ENCODE measurements at regions of chr14 and their contacts with region 1.

Region 1: GRCh38 chr14:21039585-21040369 is 2.4 kb upstream of the RNASE7 start:
- DNase-seq: peak in 1 of 2 donors; percentile 72
- ATAC-seq: peak; percentile 53 to 68
- H3K4me3 ChIP-seq: peak overlapping the region in 2 of 4 donors; percentile 19 to 26
- H3K27ac ChIP-seq: peak overlapping the region; percentile 83 to 91 (median 86)
- H3K4me1 ChIP-seq: peaks cover 62 to 75% of the 10 kb centered on the region in 2 donors
- H3K27me3 ChIP-seq: no peaks in the 10 kb centered on the region
- CTCF ChIP-seq: peak; percentile 77 to 84 (median 79)
- POLR2A ChIP-seq: peak in 1 of 2 donors; percentile 1

Region 2: DNA sequence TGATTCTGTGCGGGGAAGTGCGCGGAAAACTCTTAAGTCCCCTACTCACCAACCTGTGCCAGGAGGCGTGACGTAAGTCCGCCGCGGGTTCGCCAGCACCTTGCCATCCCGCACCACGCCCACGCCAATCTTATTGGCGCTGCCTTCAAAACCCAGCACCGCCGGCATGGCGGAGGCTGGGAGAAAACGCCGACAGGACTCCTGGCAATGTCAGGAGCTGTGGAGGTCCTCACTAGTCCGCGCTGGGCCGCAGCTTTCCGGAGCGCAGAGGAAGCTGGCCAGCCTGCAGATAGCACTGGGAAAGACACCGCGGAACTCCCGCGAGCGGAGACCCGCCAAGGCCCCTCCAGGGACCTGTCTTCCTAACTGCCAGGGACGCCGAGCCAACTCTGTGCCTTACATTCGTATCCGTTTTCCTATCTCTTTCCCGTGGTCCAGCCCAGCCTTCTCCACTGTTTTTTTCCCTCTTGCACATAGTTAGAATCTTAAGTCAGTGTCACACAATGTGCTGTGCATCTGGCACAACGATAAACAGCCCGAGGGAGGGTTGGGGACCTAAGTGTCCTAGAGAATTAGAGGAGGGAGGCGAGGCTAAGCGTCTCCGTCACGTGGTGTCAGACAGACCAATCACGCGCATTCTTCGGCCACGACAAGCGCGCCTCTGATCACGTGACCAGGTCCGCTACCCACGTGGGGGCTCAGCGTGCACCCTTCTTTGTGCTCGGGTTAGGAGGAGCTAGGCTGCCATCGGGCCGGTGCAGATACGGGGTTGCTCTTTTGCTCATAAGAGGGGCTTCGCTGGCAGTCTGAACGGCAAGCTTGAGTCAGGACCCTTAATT is 585.0 kb before region 1 on chr14 and contains the starts of genes APEX1 and OSGEP:
- in situ Hi-C with region 1: loop called in 1 of 4 experiments (anchors 25 kb)
- intact Hi-C with region 1: no loop called
- DNase-seq: peak; percentile 99
- ATAC-seq: peak; percentile 95 to 96
- H3K4me3 ChIP-seq: peak within 1 kb of the TSS; percentile 81 to 88 (median 87)
- H3K27ac ChIP-seq: peak within 1 kb of the TSS; percentile 86 to 98 (median 98)
- H3K4me1 ChIP-seq: peaks cover 23 to 29% of the 10 kb centered on the region in 2 donors
- H3K27me3 ChIP-seq: no peaks in the 10 kb centered on the region
- CTCF ChIP-seq: peak in 3 of 5 experiments; percentile 20 to 51 (median 51)
- POLR2A ChIP-seq: peak; percentile 91 to 95
- total RNA-seq, gene APEX1: 65.6 to 132 (median 94.2) TPM
- total RNA-seq, gene OSGEP: 15.8 to 21.7 (median 20.5) TPM

Region 3: GRCh38 chr14:20461274-20462001 is 578.3 kb before region 1 on chr14 and contains the start of gene PIP4P1:
- in situ Hi-C with region 1: loop called in 1 of 4 experiments (anchors 25 kb)
- intact Hi-C with region 1: loop called (anchors 1 kb)
- DNase-seq: peak; percentile 100
- ATAC-seq: peak; percentile 96 to 97
- H3K4me3 ChIP-seq: peak within 1 kb of the TSS; percentile 93 to 99 (median 96)
- H3K27ac ChIP-seq: peak within 1 kb of the TSS; percentile 98 to 99 (median 98)
- H3K4me1 ChIP-seq: peaks cover 15 to 16% of the 10 kb centered on the region in 2 donors
- H3K27me3 ChIP-seq: no peaks in the 10 kb centered on the region
- CTCF ChIP-seq: peak in 2 of 5 experiments; percentile 20 to 39
- POLR2A ChIP-seq: peak; percentile 97 to 99
- total RNA-seq, gene PIP4P1: 18.8 to 38.5 (median 21.7) TPM

Region 4: DNA sequence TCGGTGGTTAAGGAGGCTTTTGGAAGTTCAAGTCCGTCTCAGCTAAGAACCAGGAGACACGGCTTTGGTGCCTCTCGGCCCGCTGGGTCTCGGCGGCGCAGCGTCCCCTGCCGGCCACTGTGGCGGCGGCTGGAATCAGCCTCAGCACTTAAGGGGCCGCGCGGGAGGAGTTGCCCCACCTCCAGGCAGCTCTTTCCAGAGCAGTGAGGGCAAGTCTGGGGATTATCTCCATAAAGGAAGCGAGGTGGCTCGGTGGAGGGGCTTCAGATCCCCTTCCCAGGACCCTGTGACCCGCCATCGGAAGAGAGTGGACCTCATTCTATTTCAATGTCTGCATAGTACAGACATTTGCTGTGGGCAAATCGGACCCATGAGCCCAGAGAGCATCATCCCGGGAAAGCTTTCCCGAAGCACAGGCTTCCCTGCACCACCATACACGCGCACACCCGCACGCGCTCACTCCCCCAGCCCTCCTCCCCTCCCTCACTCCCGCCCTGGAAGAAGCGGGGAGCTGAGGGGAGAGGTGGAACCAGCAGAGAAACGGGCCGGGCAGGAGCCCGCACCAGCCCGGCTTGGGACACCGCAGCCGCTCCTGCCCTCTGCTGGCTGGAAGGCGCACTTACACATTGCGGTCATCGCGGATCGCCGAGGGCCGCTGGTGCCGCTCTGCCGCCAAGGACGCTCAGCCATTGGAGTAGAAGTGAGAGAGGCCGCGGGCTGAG is 68.6 kb before region 1 on chr14:
- in situ Hi-C with region 1: no loop called
- intact Hi-C with region 1: loop called (anchors 1 kb)
- DNase-seq: peak; percentile 62 to 74
- ATAC-seq: peak; percentile 92 to 93
- H3K4me3 ChIP-seq: peak overlapping the region; percentile 68 to 80 (median 71)
- H3K27ac ChIP-seq: peak overlapping the region; percentile 40 to 67 (median 59)
- H3K4me1 ChIP-seq: peaks cover 5 to 7% of the 10 kb centered on the region in 2 donors
- H3K27me3 ChIP-seq: no peaks in the 10 kb centered on the region
- CTCF ChIP-seq: peak; percentile 77 to 88 (median 84)
- POLR2A ChIP-seq: no peak

Region 5: DNA sequence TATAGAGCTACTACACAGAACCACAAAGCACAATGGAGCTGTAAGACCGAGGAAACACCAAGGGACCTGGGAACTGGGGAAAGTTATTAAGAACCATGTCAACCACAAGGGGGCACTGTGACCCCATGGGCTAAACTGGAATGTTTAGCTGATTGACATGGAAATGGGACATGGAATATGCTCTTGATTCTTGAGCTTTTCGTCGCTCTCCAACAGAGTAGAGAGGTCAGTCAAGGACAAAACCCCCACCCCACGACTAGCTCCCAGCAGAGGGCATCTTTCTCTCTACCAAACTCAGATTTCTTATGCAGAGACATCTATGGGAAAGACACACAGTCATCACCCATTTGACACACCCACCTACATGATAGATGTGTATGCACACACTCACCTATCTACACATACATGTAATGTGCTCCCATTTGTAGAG is 25.0 kb before region 1 on chr14:
- in situ Hi-C with region 1: no loop called
- intact Hi-C with region 1: loop called (anchors 1 kb)
- DNase-seq: peak; percentile 78 to 86
- ATAC-seq: peak; percentile 72 to 88
- H3K4me3 ChIP-seq: no peak overlapping the region
- H3K27ac ChIP-seq: peak overlapping the region; percentile 97 to 100 (median 100)
- H3K4me1 ChIP-seq: peaks cover 51 to 56% of the 10 kb centered on the region in 2 donors
- H3K27me3 ChIP-seq: no peaks in the 10 kb centered on the region
- CTCF ChIP-seq: peak; percentile 96 to 99 (median 98)
- POLR2A ChIP-seq: no peak

Region 6: DNA sequence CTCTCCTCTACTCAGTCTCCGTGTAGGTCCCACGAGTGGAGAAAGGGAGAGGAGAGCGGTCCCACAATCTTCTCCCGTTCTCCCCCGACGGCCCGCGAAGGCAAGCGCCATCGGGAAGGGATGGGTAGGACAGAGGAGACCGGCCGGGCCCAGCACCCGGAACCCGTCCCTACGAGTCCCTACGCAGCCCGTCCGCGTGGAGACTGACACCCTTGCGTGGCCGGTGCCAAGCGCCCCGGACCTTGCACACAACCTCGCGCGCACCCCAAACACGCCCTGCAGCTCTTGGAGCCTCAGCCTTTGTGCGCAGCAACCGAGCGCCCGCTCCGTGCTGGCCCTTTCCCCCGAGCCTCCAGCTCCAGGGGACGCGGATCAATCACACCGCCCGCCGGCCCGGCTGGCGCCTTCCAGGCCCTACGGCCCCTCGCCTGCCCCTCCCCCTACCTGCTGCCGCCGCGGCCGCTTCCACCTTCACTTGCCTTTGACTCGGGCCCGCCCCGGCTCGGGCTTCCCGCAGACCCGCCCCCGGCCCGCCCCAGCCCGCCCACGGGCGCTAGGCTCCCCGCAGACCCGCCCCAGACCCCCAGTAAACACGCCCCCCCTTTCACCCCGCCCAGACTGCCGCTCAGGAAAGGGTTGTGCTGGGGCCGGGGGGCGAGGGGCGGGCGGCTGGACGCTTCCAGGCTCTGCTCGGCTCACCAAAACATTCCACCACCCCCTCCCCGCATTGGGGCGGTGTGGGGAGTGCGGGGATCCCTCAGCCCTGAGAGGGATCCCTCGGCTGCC is 15.0 kb before region 1 on chr14 and contains the start of gene NDRG2:
- in situ Hi-C with region 1: no loop called
- intact Hi-C with region 1: loop called (anchors 1 kb)
- DNase-seq: peak; percentile 82 to 89
- ATAC-seq: peak; percentile 36 to 56
- H3K4me3 ChIP-seq: peak within 1 kb of the TSS; percentile 95 to 99 (median 99)
- H3K27ac ChIP-seq: peak within 1 kb of the TSS; percentile 97 to 100 (median 100)
- H3K4me1 ChIP-seq: peaks cover 65 to 68% of the 10 kb centered on the region in 2 donors
- H3K27me3 ChIP-seq: no peaks in the 10 kb centered on the region
- CTCF ChIP-seq: no peak
- POLR2A ChIP-seq: peak; percentile 73 to 90
- total RNA-seq, gene NDRG2: 759 to 2,790 (median 1,841) TPM

Measured in gastrocnemius medialis (tissue), 4 donors.